HepG2 (cell line): ENCODE measurements at regions of chr20 and their contacts with region 1.

Region 1: DNA sequence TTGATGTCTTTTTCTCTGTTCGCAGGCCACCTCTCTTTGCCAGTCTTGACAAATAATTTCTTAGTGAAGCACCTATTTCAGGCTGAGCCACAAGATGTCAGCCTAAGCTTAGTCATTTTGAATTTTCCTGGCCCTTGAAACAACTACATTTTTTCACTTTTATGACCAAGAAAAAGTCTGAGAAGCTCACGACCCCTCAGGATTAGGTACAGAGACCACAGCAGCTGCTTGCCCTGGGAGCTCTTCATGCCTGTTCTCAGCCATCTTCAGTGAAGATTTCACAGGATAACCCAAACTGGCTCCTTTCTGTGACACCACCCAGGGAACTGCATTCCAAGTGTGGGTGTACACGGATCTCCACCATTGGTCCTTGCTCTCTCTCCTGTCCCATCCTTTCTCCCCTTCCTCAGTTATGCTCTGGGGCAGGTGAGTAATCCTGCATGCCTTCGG is 38.4 kb upstream of the SPTLC3 start:
- DNase-seq: peak; percentile 74
- ATAC-seq: peak; percentile 80
- H3K4me3 ChIP-seq: no peak overlapping the region
- H3K27ac ChIP-seq: no peak overlapping the region
- H3K4me1 ChIP-seq: peaks cover 30% of the 10 kb centered on the region
- H3K27me3 ChIP-seq: no peaks in the 10 kb centered on the region
- CTCF ChIP-seq: peak; percentile 91
- EP300 ChIP-seq: no peak
- POLR2A ChIP-seq: no peak
- RAD21 ChIP-seq: peak; percentile 95

Region 2: GRCh38 chr20:11676630-11677284 is 1293.6 kb before region 1 on chr20:
- CTCF ChIA-PET with region 1: no interaction called
- POLR2A ChIA-PET with region 1: no interaction called
- in situ Hi-C with region 1: no loop called
- intact Hi-C with region 1: loop called (anchors 1 kb)
- DNase-seq: peak; percentile 62
- ATAC-seq: peak; percentile 99
- H3K4me3 ChIP-seq: no peak overlapping the region
- H3K27ac ChIP-seq: no peak overlapping the region
- H3K4me1 ChIP-seq: no peaks in the 10 kb centered on the region
- H3K27me3 ChIP-seq: no peaks in the 10 kb centered on the region
- CTCF ChIP-seq: peak; percentile 89
- EP300 ChIP-seq: no peak
- POLR2A ChIP-seq: no peak
- RAD21 ChIP-seq: peak; percentile 87

Region 3: DNA sequence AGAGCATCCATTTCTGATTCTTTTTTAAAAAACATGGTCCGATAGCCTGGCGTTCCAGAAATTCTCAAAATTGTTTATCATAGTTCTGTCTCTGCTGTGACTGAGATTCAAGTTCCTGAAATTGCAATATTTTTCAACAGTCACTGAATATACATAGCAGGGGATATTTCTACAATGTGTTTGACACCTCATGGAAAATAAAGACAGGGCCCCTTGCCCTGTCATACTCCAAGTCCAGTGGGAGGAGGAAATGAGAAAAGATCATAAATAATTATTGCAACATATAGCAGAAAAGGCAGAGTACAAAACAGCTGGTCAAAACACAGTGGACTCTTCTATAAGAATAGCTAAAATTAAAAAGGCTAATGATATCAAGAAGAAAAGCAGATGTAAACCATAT is 196.5 kb before region 1 on chr20:
- CTCF ChIA-PET with region 1: no interaction called
- POLR2A ChIA-PET with region 1: no interaction called
- in situ Hi-C with region 1: no loop called
- intact Hi-C with region 1: no loop called
- DNase-seq: no peak
- ATAC-seq: no peak
- H3K4me3 ChIP-seq: no peak overlapping the region
- H3K27ac ChIP-seq: no peak overlapping the region
- H3K4me1 ChIP-seq: no peaks in the 10 kb centered on the region
- H3K27me3 ChIP-seq: no peaks in the 10 kb centered on the region
- CTCF ChIP-seq: no peak
- EP300 ChIP-seq: no peak
- POLR2A ChIP-seq: no peak
- RAD21 ChIP-seq: no peak

Region 4: DNA sequence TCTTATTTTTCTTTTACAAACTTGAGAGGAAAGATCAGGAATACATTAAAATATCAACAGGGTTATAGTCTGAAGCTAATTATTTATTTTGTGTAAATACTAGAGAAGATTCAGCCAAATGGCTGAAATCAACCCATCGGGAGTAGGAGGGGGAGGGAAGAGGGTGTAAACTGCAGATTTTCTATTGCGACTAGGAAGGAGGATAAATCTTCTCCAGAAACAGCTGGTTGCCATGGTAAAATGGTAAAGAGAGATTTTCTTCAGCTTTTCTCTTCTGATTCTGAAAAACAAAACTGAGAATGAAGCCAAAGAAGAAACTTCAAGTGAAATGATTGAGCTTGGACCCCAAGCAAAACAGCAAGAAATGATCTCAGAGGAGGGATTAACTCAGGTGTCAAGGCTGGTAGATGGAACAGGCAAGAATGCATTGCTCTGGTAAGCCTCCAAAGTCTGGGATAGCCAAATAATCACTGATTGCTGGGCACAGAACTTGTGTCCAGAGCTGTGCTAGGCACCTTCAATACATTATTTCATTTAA is 155.1 kb before region 1 on chr20:
- CTCF ChIA-PET with region 1: no interaction called
- POLR2A ChIA-PET with region 1: no interaction called
- in situ Hi-C with region 1: no loop called
- intact Hi-C with region 1: no loop called
- DNase-seq: no peak
- ATAC-seq: no peak
- H3K4me3 ChIP-seq: no peak overlapping the region
- H3K27ac ChIP-seq: no peak overlapping the region
- H3K4me1 ChIP-seq: no peaks in the 10 kb centered on the region
- H3K27me3 ChIP-seq: no peaks in the 10 kb centered on the region
- CTCF ChIP-seq: no peak
- EP300 ChIP-seq: no peak
- POLR2A ChIP-seq: no peak
- RAD21 ChIP-seq: no peak

Region 5: GRCh38 chr20:12925214-12925755 is 45.1 kb before region 1 on chr20:
- CTCF ChIA-PET with region 1: interaction called, 127 read pairs
- POLR2A ChIA-PET with region 1: interaction called, 3 read pairs
- in situ Hi-C with region 1: loop called (anchors 5 kb)
- intact Hi-C with region 1: loop called (anchors 1 kb)
- DNase-seq: peak; percentile 89
- ATAC-seq: peak; percentile 84
- H3K4me3 ChIP-seq: peak overlapping the region; percentile 56 to 79 (median 73)
- H3K27ac ChIP-seq: peak overlapping the region; percentile 6
- H3K4me1 ChIP-seq: peaks cover 68% of the 10 kb centered on the region
- H3K27me3 ChIP-seq: peaks cover 0 to 5% of the 10 kb centered on the region in 2 experiments; a peak in 1 of 5 replicates
- CTCF ChIP-seq: peak; percentile 99
- EP300 ChIP-seq: 0 out of 4 replicates have a peak, but pooled peaks of 1 of the 2 experiments have one; percentile 24
- POLR2A ChIP-seq: no peak
- RAD21 ChIP-seq: peak; percentile 99

Region 6: DNA sequence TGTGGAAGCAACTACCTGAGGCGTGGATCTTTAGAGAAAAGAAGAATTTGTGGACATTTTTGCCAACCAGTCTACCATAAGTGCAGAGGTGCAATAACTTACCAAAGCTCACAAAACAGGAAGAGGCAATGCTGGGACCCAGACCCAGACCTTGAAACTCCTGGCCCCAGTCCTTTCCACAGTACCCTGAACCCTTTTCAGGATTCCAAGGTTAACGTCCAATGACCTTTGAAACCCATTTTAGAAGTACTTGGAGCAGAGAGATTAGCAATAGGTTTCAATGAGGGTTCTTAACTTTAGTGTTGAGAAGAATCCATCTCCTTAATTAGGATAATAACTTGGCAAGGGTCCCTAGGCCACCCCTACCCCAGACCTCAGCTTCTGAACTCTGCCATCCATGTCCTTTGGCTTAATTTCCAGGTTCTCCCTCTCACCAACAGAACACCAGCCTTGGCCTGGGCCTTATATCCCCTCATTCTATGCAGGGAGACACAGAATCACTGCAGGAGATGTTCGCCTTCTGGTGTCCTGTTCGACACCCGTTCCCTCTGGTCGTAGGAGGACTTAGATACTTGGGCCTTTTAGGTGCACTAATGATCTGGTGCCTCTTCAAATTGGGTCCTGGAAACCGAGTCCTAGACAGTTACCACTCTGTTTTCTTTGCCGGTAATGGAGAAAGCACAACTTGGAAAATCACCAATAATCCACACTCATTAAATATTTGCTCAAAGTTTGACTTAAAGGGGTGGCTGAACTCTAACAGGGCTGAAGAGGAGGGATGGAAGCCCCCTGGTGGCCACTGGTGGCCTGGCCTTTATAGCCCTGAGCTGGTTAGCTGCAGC is 291.3 kb after region 1 on chr20:
- CTCF ChIA-PET with region 1: interaction called, 9 read pairs
- POLR2A ChIA-PET with region 1: interaction called, 3 read pairs
- in situ Hi-C with region 1: no loop called
- intact Hi-C with region 1: loop called (anchors 1 kb)
- DNase-seq: peak; percentile 86
- ATAC-seq: peak; percentile 99
- H3K4me3 ChIP-seq: no peak overlapping the region
- H3K27ac ChIP-seq: no peak overlapping the region
- H3K4me1 ChIP-seq: peaks cover 32% of the 10 kb centered on the region
- H3K27me3 ChIP-seq: no peaks in the 10 kb centered on the region
- CTCF ChIP-seq: peak; percentile 96
- EP300 ChIP-seq: 0 out of 4 replicates have a peak, but pooled peaks of 1 of the 2 experiments have one; percentile 39
- POLR2A ChIP-seq: no peak
- RAD21 ChIP-seq: peak; percentile 95

Region 7: DNA sequence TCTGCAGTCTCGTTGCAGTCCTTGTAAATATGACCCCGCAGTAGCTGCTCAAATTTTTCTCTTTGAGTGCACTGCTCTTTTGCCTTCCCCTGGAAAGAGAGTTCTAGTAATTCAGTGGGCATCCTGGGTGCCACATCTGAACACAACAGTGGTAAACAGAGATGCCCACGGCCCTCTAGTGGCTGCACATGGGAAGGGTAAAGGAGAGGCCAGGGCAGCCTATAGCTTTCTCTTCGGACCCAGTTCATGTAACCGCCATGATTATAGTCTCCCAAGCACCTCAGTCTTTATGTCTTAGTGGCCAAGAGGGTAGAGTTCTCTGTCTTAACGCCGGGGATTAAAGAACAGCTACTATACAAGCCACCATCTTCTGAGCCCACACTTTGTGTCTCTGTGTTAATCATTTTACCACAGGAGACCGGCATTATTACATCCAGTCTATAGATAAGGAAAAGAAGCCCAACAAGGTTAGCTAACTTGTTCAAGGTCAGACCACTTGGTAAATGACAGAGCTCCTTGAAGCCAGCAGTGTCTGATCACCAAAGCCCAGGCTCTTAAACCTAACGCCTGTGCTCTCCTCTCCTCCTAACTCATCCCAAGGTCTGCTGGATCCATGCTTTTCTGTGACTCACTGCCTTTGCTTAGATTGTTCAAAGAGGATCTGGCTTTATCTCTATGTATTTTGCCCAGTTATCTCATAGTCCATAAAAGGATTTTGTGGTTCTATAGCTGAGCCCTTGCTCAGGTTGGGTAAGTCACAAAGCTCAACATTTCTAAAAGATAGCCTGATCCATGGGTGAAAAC is 332.5 kb after region 1 on chr20:
- CTCF ChIA-PET with region 1: no interaction called
- POLR2A ChIA-PET with region 1: no interaction called
- in situ Hi-C with region 1: loop called (anchors 25 kb)
- intact Hi-C with region 1: loop called (anchors 5 kb)
- DNase-seq: peak; percentile 49
- ATAC-seq: peak; percentile 97
- H3K4me3 ChIP-seq: no peak overlapping the region
- H3K27ac ChIP-seq: no peak overlapping the region
- H3K4me1 ChIP-seq: peaks cover 22% of the 10 kb centered on the region
- H3K27me3 ChIP-seq: no peaks in the 10 kb centered on the region
- CTCF ChIP-seq: peak; percentile 82
- EP300 ChIP-seq: no peak
- POLR2A ChIP-seq: no peak
- RAD21 ChIP-seq: peak; percentile 79

Region 8: DNA sequence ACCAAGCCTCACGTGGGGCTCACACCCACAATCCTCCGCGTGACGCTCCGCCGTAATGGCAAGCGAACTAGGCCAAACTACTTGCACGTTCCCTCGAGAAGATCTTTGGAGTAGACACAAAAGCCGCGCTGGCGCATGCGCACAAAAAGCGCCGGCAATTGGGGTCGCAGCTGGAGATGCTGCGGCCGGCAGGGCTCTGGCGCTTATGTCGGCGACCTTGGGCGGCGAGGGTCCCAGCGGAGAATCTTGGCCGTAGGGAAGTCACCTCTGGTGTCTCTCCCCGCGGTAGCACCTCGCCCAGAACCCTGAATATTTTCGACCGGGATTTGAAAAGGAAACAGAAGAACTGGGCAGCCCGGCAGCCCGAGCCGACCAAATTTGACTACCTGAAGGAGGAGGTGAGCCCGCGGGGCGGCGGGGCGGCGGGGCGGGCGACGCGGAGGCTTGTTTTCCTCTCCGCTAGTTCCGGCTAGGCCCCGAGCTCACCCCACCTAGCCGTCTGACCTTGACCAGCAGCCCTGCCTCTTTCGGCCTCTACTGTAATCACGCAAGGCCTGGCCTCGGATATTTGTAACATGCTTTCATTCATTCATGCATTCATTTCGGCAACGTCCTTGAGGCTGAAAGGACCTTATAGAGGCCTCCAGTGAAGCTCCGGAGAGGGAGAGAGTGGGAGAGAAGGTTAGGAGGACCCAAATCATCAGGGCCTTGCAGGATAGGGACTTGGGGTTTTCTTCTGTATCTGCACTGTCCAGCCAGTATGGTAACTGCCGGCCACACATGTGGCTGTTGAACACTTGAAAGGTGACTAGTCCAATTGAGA is 814.7 kb after region 1 on chr20 and contains the starts of genes ESF1 and NDUFAF5:
- CTCF ChIA-PET with region 1: no interaction called
- POLR2A ChIA-PET with region 1: no interaction called
- in situ Hi-C with region 1: loop called (anchors 10 kb)
- intact Hi-C with region 1: no loop called
- DNase-seq: peak; percentile 99
- ATAC-seq: peak; percentile 95
- H3K4me3 ChIP-seq: peak within 1 kb of the TSS; percentile 84 to 90 (median 86)
- H3K27ac ChIP-seq: peak within 1 kb of the TSS; percentile 93
- H3K4me1 ChIP-seq: peaks cover 66% of the 10 kb centered on the region
- H3K27me3 ChIP-seq: no peaks in the 10 kb centered on the region; a peak in 1 of 5 replicates
- CTCF ChIP-seq: peak; percentile 42
- EP300 ChIP-seq: peak; percentile 69 to 76; a peak in 2 of 4 replicates
- POLR2A ChIP-seq: peak; percentile 40 to 87; a peak in 3 of 4 replicates
- RAD21 ChIP-seq: peak; percentile 24
- total RNA-seq, gene ESF1: 66.9 and 95.1 TPM in 2 replicates
- total RNA-seq, gene NDUFAF5: 66.7 and 86.0 TPM in 2 replicates